Right ventricle myocardium superior (tissue), 1 donor: ENCODE measurements at regions of chr1 and their contacts with region 1.

Region 1: GRCh38 chr1:234918181-234918841 is 210.3 kb downstream of the TOMM20 start:
- DNase-seq: peak; percentile 54
- ATAC-seq: peak; percentile 5

Region 2: DNA sequence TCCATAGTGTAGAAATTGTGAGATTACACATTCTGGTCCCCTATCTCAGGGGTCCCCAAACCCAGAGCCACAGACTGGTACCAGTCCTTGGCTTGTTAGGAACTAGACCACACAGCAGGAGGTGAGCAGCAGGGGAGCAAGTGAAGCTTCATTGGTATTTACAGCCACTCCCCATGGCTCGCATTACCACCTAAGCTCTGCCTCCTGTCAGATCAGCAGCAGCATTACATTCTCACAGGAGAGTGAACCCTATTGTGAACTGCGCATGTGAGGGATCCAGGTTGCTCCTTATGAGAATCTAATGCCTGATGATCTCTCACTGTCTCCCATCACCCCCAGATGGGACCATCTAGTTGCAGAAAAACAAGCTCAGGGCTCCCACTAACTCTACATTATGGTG is 78.6 kb before region 1 on chr1:
- intact Hi-C with region 1: no loop called
- DNase-seq: no peak
- ATAC-seq: no peak

Region 3: DNA sequence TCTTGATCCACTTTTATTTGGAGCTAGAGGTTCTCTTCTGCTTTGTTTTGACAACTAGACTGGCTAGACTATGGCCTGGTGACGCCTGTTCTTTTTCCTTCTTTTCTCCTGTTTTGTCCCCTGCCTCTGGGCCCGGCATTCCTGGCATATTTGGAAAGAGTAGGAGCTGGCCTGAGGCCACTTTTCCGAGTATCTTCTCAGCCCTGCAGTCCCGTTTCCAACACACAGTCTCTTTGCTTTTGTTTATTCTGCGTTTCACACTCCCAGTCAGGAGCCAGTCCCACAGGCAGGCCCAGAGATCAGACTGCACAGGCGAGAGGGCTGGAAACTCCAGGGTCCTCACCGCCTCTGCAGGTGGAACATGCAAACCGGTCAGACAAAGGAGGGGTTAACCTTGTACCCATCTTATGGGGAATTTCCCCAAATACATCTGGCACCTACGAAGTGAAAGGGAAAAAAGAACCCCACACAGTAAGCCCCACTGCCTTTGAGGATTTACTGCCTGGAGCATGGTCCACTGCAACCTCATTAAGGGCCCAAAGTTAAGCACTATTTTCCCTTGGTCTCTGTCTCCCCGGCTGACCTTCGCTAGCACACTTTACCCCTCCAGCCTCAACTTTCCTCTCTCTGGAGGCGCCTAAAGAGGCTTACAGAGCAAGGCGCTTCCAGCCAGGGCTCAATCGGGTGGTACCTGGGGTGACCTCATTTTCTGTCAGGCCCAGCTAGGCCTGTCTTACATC is 69.3 kb after region 1 on chr1:
- intact Hi-C with region 1: loop called (anchors 5 kb)
- DNase-seq: peak; percentile 75
- ATAC-seq: peak; percentile 88

Region 4: GRCh38 chr1:235075188-235075926 is 157.0 kb after region 1 on chr1:
- intact Hi-C with region 1: loop called (anchors 10 kb)
- DNase-seq: peak; percentile 80
- ATAC-seq: peak; percentile 54